ENCODE measurements at regions of chr3 and their contacts with region 1.

Region 1: GRCh38 chr3:187738331-187739093 is 6.8 kb downstream of the BCL6 start:
- DNase-seq: no peak
- H3K4me3 ChIP-seq: peak overlapping the region; percentile 94
- CTCF ChIP-seq: peak; percentile 76

Region 2: DNA sequence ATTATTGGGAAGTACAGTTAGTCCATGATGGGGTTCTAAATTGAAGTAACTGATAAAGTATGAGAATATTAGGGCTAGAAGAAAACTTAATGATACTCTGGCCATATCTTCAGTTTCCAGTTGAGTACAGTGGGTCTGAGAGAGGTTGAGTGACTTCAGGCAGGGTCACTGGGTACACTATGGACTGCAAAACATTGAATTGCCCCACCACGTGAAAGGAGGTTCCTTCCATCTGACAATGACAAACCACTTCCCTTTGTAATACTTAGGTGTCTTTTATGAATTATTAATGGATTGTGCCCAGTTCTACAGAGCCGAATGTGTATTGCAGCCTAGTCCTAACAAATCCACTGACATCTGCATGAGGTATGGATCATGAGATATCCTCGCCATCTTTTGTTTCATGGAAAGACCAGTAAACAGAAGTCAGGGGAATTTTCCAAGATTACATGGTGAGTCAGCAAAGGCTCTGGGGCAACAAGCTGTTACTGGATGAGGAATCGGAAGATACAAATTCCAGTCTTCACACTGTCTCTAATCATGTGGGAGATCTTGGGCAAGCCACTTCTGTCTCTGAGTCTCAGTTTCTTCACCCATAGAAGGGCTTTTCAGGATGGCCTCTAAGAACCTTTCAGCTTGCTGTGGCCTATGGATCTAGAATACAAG is 73.2 kb after region 1 on chr3:
- CTCF ChIA-PET with region 1: no interaction called
- POLR2A ChIA-PET with region 1: no interaction called
- DNase-seq: peak; percentile 51
- H3K4me3 ChIP-seq: no peak overlapping the region
- CTCF ChIP-seq: no peak

Region 3: GRCh38 chr3:188137051-188137450 is 398.5 kb after region 1 on chr3:
- CTCF ChIA-PET with region 1: interaction called, 11 read pairs
- POLR2A ChIA-PET with region 1: no interaction called
- DNase-seq: no peak
- H3K4me3 ChIP-seq: no peak overlapping the region
- CTCF ChIP-seq: no peak

Region 4: GRCh38 chr3:188262913-188263683 is 524.6 kb after region 1 on chr3:
- CTCF ChIA-PET with region 1: interaction called, 61 read pairs
- POLR2A ChIA-PET with region 1: interaction called, 7 read pairs
- DNase-seq: no peak
- H3K4me3 ChIP-seq: no peak overlapping the region
- CTCF ChIP-seq: no peak

Region 5: GRCh38 chr3:188303286-188303813 is 564.8 kb after region 1 on chr3:
- CTCF ChIA-PET with region 1: interaction called, 16 read pairs
- POLR2A ChIA-PET with region 1: no interaction called
- DNase-seq: no peak
- H3K4me3 ChIP-seq: no peak overlapping the region
- CTCF ChIP-seq: no peak

Region 6: GRCh38 chr3:188365978-188366698 is 627.6 kb after region 1 on chr3:
- CTCF ChIA-PET with region 1: interaction called, 10 read pairs
- POLR2A ChIA-PET with region 1: no interaction called
- DNase-seq: no peak
- H3K4me3 ChIP-seq: no peak overlapping the region
- CTCF ChIP-seq: no peak

Region 7: GRCh38 chr3:188472331-188472730 is 733.8 kb after region 1 on chr3:
- CTCF ChIA-PET with region 1: interaction called, 13 read pairs
- POLR2A ChIA-PET with region 1: no interaction called
- DNase-seq: no peak
- H3K4me3 ChIP-seq: no peak overlapping the region
- CTCF ChIP-seq: no peak

Region 8: DNA sequence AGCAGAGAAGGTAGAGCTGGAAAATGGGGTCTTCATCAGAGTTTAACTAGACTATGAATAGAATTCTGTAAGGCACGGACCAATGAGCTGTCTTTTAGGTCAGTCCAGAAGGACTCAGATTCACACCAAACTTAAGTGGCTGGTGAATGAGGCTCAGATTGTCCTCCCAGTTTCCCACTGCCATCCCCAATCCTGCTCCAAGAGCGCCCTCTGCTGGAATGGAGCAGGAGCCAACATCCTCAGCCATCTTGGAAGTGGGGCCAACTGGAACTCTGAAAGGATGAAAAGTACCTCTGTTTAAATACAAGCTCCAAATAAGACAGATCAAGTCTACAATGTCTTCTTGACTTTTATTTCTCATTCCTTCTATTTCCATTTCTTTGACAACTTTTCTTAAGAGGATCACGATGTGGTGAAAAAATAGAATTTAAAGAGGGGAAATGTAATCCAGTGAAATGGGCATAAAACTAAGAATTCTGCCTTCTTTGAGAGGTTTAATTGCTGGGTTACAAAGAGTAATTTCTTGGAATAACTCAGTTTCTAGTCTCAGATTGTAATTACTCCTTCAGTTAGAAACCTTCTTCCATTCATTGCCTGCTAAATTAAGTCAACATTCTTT is 1216.2 kb after region 1 on chr3:
- CTCF ChIA-PET with region 1: interaction called, 322 read pairs
- POLR2A ChIA-PET with region 1: interaction called, 5 read pairs
- DNase-seq: no peak
- H3K4me3 ChIP-seq: no peak overlapping the region
- CTCF ChIP-seq: peak; percentile 89

Measured in AG04449 (cell line).